ENCODE measurements at regions of chr12 and their contacts with region 1.

Region 1: GRCh38 chr12:14948672-14949071 is 10.3 kb upstream of the ERP27 start:
- DNase-seq: peak; percentile 84 to 97 (median 95)
- H3K4me3 ChIP-seq: peak overlapping the region in 6 of 7 experiments; percentile 19 to 59 (median 40)
- H3K27ac ChIP-seq: peak overlapping the region; percentile 82 to 92
- H3K4me1 ChIP-seq: peaks cover 59 to 78% (median 67%) of the 10 kb centered on the region in 4 experiments
- H3K27me3 ChIP-seq: no peaks in the 10 kb centered on the region

Region 2: DNA sequence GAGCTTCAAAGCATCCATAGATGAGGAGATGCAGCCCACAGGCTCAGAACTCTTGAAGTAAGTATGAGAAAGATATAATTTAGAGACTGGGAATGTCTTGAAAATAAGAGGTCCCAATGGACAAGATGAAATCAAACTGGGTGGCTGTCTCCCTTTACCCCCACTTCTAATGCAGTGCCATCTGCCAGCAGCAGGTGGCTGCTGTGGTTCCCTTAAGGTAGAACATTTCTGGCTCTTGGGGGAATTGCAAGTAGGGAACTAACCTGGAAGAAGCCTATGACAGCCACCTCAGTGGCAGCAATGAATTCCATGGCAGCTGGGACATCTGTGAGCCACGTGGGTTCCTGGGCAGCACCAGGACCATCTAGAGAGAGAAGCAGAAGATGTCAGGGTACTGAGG is 11.0 kb before region 1 on chr12:
- CTCF ChIA-PET with region 1: interaction called, 15 read pairs
- POLR2A ChIA-PET with region 1: interaction called, 4 read pairs
- DNase-seq: peak in 2 of 3 donors; percentile 53 to 59
- H3K4me3 ChIP-seq: no peak overlapping the region
- H3K27ac ChIP-seq: no peak overlapping the region
- H3K4me1 ChIP-seq: peaks cover 4 to 9% (median 7%) of the 10 kb centered on the region in 4 experiments
- H3K27me3 ChIP-seq: no peaks in the 10 kb centered on the region

Region 3: GRCh38 chr12:14960548-14961465 is 12.1 kb after region 1 on chr12:
- CTCF ChIA-PET with region 1: interaction called, 11 read pairs
- POLR2A ChIA-PET with region 1: interaction called, 10 read pairs
- DNase-seq: peak; percentile 74 to 94 (median 91)
- H3K4me3 ChIP-seq: peak overlapping the region; percentile 85 to 96 (median 92)
- H3K27ac ChIP-seq: peak overlapping the region; percentile 89 to 94
- H3K4me1 ChIP-seq: peaks cover 61 to 94% (median 76%) of the 10 kb centered on the region in 4 experiments
- H3K27me3 ChIP-seq: no peaks in the 10 kb centered on the region

Region 4: GRCh38 chr12:15001733-15002382 is 53.2 kb after region 1 on chr12:
- CTCF ChIA-PET with region 1: no interaction called
- POLR2A ChIA-PET with region 1: no interaction called
- DNase-seq: no peak
- H3K4me3 ChIP-seq: no peak overlapping the region
- H3K27ac ChIP-seq: no peak overlapping the region
- H3K4me1 ChIP-seq: no peaks in the 10 kb centered on the region
- H3K27me3 ChIP-seq: peaks cover 0 to 14% (median 4%) of the 10 kb centered on the region in 5 experiments